Tibial artery (tissue), 4 donors: ENCODE measurements at regions of chr11 and their contacts with region 1.

Region 1: GRCh38 chr11:76598426-76598839 is 72.1 kb downstream of the LRRC32 start:
- DNase-seq: peak in 1 of 2 donors; percentile 43
- H3K4me3 ChIP-seq: no peak overlapping the region
- H3K27ac ChIP-seq: no peak overlapping the region
- H3K4me1 ChIP-seq: peaks cover 0 to 16% (median 7%) of the 10 kb centered on the region in 4 donors
- H3K27me3 ChIP-seq: no peaks in the 10 kb centered on the region
- CTCF ChIP-seq: peak; percentile 57 to 62

Region 2: GRCh38 chr11:76674517-76675400 is 76.3 kb after region 1 on chr11:
- intact Hi-C with region 1: loop called (anchors 5 kb)
- DNase-seq: no peak
- H3K4me3 ChIP-seq: no peak overlapping the region
- H3K27ac ChIP-seq: peak overlapping the region in 1 of 2 donors; percentile 91
- H3K4me1 ChIP-seq: peaks cover 6 to 29% (median 18%) of the 10 kb centered on the region in 4 donors
- H3K27me3 ChIP-seq: no peaks in the 10 kb centered on the region
- CTCF ChIP-seq: no peak